ENCODE measurements at regions of chr18 and their contacts with region 1.

Region 1: GRCh38 chr18:11851146-11851805 is at the start of gene CHMP1B:
- DNase-seq: peak; percentile 98 to 99 (median 98)
- H3K4me3 ChIP-seq: peak within 1 kb of the TSS; percentile 64 to 100 (median 94)
- H3K27ac ChIP-seq: peak within 1 kb of the TSS; percentile 66 to 98 (median 92)
- H3K27me3 ChIP-seq: no peaks in the 10 kb centered on the region
- CTCF ChIP-seq: peak in 29 of 56 donors; percentile 4 to 62 (median 28)
- total RNA-seq, gene CHMP1B: 26.5 to 54.3 (median 43.5) TPM

Region 2: DNA sequence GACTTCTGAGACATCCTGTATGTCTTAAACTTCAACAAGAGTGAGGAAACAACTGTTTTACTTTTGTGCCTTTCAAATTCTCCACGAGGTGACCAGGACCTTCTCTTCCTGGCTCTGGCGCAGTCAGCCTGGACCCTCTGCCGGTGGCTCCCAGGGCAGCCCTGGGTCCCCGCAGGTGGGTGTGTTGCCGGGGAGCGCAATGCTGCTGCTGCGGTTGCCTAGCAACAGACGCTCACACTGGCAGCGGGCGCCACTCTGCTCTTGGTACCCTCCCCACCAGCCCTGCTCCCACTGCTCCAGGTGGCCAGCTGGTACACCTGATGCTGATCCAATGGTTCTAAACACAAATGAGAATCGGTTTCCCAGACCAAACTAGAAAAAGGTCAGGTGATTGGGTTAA is 103.5 kb before region 1 on chr18:
- intact Hi-C with region 1: no loop called
- DNase-seq: no peak
- H3K4me3 ChIP-seq: no peak overlapping the region
- H3K27ac ChIP-seq: no peak overlapping the region
- H3K27me3 ChIP-seq: peaks cover 0 to 53% (median 21%) of the 10 kb centered on the region in 45 donors
- CTCF ChIP-seq: no peak

Region 3: GRCh38 chr18:11800566-11801334 is 50.5 kb before region 1 on chr18:
- intact Hi-C with region 1: no loop called
- DNase-seq: no peak
- H3K4me3 ChIP-seq: no peak overlapping the region
- H3K27ac ChIP-seq: no peak overlapping the region
- H3K27me3 ChIP-seq: no peaks in the 10 kb centered on the region
- CTCF ChIP-seq: no peak

Region 4: GRCh38 chr18:11908182-11909060 is 57.1 kb after region 1 on chr18 and contains the start of gene MPPE1:
- intact Hi-C with region 1: loop called (anchors 2 kb)
- DNase-seq: peak; percentile 73 to 91 (median 87)
- H3K4me3 ChIP-seq: peak within 1 kb of the TSS; percentile 46 to 94 (median 85)
- H3K27ac ChIP-seq: peak within 1 kb of the TSS; percentile 87 to 100 (median 98)
- H3K27me3 ChIP-seq: no peaks in the 10 kb centered on the region
- CTCF ChIP-seq: peak in 23 of 56 donors; percentile 2 to 53 (median 24)
- total RNA-seq, gene MPPE1: 28.8 to 68.7 (median 48.6) TPM

Region 5: DNA sequence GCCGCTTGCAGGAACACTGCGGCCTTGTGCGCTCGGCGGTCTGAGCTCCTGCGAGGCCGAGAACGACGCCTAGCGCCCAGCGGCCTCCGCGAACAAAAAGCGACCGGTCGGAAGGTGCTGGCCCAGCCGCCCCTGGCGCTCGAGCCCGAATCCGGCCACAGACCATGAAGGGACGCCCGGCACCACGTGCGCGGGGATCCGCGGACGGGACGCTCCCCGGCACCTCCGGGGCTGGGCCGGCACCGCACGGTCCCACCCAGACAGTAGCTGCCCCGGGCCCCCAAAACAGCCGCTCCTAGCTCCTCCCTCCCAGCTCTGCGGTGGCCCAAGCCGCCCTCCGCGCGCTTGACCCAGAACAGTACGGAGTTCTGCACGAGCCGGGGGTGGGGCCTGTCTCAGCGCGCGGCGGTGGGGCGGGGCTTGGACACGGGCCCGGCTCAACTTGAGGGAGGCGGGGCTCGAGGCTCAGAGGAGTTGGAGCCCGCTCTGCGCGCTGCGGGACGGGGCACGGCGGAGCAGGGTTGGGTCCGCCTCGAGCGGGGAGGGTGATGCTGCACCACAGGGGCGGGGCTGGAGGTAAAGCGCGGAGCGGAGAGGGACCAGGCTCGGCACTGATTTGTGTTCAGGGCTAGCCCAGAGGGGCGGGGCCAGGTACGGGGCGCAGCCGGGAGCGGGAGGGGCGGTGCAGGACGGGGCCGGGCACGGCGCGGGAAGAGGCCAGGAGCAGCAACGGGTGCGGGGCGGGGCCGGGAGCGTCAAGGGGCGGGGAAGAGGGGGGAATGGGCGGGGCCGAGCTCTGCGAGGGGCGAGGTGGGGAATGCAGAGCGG is 129.5 kb after region 1 on chr18:
- intact Hi-C with region 1: loop called in 1 of 2 experiments (anchors 5 kb)
- DNase-seq: peak; percentile 70 to 88 (median 78)
- H3K4me3 ChIP-seq: peak overlapping the region; percentile 56 to 90 (median 74)
- H3K27ac ChIP-seq: peak overlapping the region in 57 of 59 donors; percentile 13 to 90 (median 76)
- H3K27me3 ChIP-seq: peaks cover 0 to 14% (median 0%) of the 10 kb centered on the region in 45 donors
- CTCF ChIP-seq: peak in 18 of 56 donors; percentile 8 to 42 (median 23)

Region 6: DNA sequence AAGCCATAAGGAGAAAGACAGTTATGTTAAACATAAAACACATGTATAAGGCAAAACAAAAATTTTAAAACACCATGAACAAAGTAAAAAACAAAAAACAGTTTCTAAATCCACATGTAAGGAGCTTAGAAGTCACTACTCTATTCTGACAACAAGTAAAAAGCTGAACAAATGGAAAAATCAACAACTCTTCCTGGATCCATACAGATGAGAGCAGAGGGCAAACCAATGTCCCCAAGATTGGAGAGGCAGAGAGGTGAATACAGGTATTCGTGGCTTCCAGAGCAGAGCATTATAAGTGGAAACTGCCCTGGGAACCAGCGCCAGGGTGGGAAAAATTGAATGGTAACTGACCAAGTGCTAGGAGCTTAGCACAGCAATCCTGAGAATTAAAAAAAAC is 713.1 kb after region 1 on chr18:
- intact Hi-C with region 1: no loop called
- DNase-seq: no peak
- H3K4me3 ChIP-seq: no peak overlapping the region
- H3K27ac ChIP-seq: no peak overlapping the region
- H3K27me3 ChIP-seq: no peaks in the 10 kb centered on the region
- CTCF ChIP-seq: no peak

Measured in dorsolateral prefrontal cortex (tissue), 120 donors.